B cell (primary cell): ENCODE measurements at regions of chr3 and their contacts with region 1.

Region 1: DNA sequence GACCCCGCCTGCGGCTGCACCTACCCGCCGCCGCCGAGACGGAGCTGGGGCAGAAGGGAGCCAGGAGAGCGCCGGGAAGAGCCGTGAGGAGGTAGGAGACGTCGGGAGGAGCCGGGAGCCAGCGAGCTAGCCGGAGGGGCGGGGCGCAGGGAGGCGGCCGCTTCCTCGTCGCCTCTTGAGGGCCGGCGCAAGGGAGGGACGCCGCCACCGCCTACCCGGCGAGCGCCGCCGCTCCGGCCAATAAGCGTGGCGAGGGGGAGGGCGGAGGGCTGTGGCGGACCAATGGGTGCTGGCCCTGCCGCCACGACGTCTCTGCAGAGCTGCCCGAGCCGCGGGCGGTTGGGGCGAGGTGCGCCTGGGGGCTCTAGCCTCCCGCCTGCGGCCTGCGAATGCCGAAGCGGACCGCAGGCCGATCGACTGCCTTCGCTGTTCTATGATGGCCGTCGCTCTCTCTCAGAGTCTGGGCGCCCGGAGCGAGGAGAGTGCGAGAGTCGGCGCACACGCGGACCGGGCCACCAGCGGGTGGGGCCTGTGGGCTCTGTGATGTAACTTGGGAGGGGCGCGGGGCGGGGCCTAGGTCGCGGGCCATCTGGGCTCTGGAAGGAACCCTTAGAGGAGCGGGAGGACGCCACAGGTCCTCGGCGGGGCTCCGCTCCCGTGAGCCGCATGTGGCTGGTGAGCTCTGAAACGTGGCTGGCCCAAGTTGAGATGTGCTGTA is 72.7 kb upstream of the MAP4 start:
- DNase-seq: peak; percentile 97
- ATAC-seq: peak; percentile 92
- H3K4me3 ChIP-seq: peak overlapping the region; percentile 21 to 91 (median 74)
- H3K4me3 Mint-ChIP-seq: peak overlapping the region; percentile 99
- H3K27ac ChIP-seq: peak overlapping the region; percentile 83 to 86
- H3K27ac Mint-ChIP-seq: peak overlapping the region; percentile 98
- H3K4me1 ChIP-seq: peaks cover 17 to 18% of the 10 kb centered on the region in 2 donors
- H3K4me1 Mint-ChIP-seq: peaks cover 32% of the 10 kb centered on the region
- H3K27me3 ChIP-seq: no peaks in the 10 kb centered on the region
- H3K27me3 Mint-ChIP-seq: no peaks in the 10 kb centered on the region
- CTCF ChIP-seq: no peak

Region 2: GRCh38 chr3:47781685-47782445 is 307.0 kb before region 1 on chr3 and contains the start of gene SMARCC1:
- CTCF ChIA-PET with region 1: no interaction called
- POLR2A ChIA-PET with region 1: no interaction called
- intact Hi-C with region 1: loop called (anchors 2 kb)
- DNase-seq: peak; percentile 99
- ATAC-seq: peak; percentile 87
- H3K4me3 ChIP-seq: peak within 1 kb of the TSS; percentile 68 to 94 (median 78)
- H3K4me3 Mint-ChIP-seq: peak within 1 kb of the TSS; percentile 99
- H3K27ac ChIP-seq: peak within 1 kb of the TSS; percentile 91 to 96
- H3K27ac Mint-ChIP-seq: peak within 1 kb of the TSS; percentile 99
- H3K4me1 ChIP-seq: peaks cover 32 to 44% of the 10 kb centered on the region in 2 donors
- H3K4me1 Mint-ChIP-seq: peaks cover 39% of the 10 kb centered on the region
- H3K27me3 ChIP-seq: no peaks in the 10 kb centered on the region
- H3K27me3 Mint-ChIP-seq: no peaks in the 10 kb centered on the region
- CTCF ChIP-seq: no peak
- total RNA-seq, gene SMARCC1: 149 and 155 TPM in 2 replicates

Region 3: DNA sequence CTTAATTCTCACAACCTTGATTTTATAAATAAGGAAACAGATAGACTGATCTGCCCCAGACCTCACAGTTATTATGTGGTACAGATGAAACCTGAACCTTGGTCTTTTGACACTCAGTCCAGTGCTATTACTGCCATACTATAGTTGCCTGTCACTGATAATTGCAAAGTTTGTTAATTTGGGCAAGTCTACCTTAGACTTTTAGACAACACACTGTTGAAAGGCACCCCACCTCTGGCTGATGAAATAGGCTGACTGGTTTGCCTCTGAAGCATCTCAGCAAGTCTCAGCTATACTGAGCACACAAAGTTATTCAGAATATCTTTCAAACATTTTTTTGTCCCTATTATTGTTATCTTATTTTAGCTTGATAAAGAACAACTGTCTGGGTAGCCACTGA is 19.6 kb before region 1 on chr3:
- CTCF ChIA-PET with region 1: no interaction called
- POLR2A ChIA-PET with region 1: no interaction called
- intact Hi-C with region 1: no loop called
- DNase-seq: no peak
- ATAC-seq: no peak
- H3K4me3 ChIP-seq: no peak overlapping the region
- H3K4me3 Mint-ChIP-seq: no peak overlapping the region
- H3K27ac ChIP-seq: no peak overlapping the region
- H3K27ac Mint-ChIP-seq: no peak overlapping the region
- H3K4me1 ChIP-seq: no peaks in the 10 kb centered on the region
- H3K4me1 Mint-ChIP-seq: peaks cover 11% of the 10 kb centered on the region
- H3K27me3 ChIP-seq: no peaks in the 10 kb centered on the region
- H3K27me3 Mint-ChIP-seq: no peaks in the 10 kb centered on the region
- CTCF ChIP-seq: no peak

Region 4: DNA sequence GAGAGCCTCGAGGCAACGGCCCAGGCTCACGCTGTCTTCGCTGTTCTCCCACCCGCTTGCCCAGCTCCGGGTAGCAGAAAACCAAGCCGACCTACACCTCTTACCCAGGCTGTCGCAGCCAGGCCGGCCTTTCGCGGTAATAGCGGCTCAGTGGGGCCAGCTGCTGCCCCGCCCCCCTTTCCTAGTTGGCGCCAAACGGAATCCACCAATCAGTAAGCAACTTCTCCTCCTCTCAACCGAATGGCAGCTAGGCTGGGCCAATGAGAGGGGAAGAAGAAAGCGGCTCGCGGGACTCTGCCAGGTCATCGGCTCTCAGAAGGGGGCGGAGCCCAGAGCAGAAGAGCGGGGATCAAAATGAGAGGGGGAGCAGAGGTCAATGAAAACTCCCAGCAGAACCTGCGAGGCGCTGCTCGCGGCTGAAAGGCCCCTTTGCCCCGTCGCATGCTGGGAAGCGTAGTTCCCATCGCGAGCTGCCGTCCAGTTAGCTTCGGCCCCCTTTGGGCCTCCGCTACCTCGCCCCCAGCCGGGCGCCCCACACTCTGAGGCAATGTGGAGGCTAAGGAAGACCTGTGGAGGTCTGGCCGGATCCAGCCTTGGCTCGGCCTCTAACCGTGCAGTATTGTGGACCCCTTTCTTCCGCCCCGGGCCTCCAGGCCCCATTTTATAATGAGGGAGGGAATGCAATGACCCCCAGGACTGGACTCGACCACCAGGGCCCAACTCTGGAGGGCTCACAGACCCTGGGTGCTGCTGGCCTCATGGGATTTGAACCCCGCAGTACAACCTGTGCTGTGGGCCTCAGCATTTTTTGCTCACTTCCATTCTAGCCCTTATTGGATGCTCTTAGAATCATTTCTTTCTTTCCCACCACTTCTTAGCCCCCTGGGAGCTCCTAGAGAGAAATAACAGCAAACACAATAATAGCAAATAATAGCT is 99.6 kb after region 1 on chr3 and contains the start of gene CDC25A:
- CTCF ChIA-PET with region 1: no interaction called
- POLR2A ChIA-PET with region 1: no interaction called
- intact Hi-C with region 1: loop called (anchors 1 kb)
- DNase-seq: peak; percentile 97
- ATAC-seq: peak; percentile 99
- H3K4me3 ChIP-seq: peak within 1 kb of the TSS; percentile 51 to 96 (median 76)
- H3K4me3 Mint-ChIP-seq: peak within 1 kb of the TSS; percentile 94
- H3K27ac ChIP-seq: peak within 1 kb of the TSS; percentile 38 to 71
- H3K27ac Mint-ChIP-seq: peak within 1 kb of the TSS; percentile 84
- H3K4me1 ChIP-seq: peaks cover 12 to 15% of the 10 kb centered on the region in 2 donors
- H3K4me1 Mint-ChIP-seq: peaks cover 15% of the 10 kb centered on the region
- H3K27me3 ChIP-seq: peaks cover 0 to 19% (median 8%) of the 10 kb centered on the region in 4 experiments
- H3K27me3 Mint-ChIP-seq: peaks cover 17% of the 10 kb centered on the region
- CTCF ChIP-seq: no peak
- total RNA-seq, gene CDC25A: 0.07 and 0.53 TPM in 2 replicates

Region 5: DNA sequence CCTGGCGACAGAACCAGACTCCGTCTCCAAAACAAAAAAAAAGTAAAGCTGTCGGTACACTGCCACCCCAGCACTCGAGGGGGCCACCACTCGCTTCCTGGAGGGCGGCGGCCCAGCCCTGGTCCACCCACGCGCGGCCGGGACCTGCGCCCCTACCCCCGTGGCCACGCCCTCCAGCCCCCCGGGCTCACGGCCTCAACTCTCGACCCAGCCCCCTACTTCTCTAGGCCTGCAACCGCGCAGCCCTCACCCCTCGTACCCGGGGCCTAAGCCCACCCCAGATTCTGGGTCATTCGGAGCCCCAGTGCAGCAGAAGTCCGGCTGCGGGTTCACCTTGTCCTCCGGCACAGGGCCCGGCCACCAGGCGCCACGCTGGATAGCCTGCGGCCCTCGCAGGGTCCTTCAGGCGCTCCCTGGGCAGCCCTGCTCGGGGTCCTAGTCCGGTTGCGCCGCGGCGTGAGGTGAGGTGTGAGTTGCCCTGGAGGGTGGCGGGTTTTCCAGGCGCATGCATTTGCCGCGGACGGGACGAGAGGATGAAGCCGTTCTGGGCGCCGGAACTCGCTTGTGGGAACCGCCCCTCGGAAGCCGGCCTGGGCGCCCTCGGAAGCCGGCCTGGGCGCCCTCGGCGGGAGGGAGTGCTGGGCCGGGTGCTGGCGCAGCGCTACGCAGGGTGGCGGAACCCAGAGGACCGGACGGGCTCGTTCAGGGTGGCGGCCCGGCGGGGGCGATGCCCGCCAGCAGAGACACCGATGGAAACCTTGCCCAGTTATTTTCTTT is 212.3 kb after region 1 on chr3:
- CTCF ChIA-PET with region 1: no interaction called
- POLR2A ChIA-PET with region 1: no interaction called
- intact Hi-C with region 1: loop called (anchors 2 kb)
- DNase-seq: peak; percentile 94
- ATAC-seq: peak; percentile 91
- H3K4me3 ChIP-seq: peak within 1 kb of the TSS; percentile 41 to 90 (median 82)
- H3K4me3 Mint-ChIP-seq: peak within 1 kb of the TSS; percentile 97
- H3K27ac ChIP-seq: peak within 1 kb of the TSS; percentile 92 to 96
- H3K27ac Mint-ChIP-seq: peak within 1 kb of the TSS; percentile 99
- H3K4me1 ChIP-seq: peaks cover 17 to 25% of the 10 kb centered on the region in 2 donors
- H3K4me1 Mint-ChIP-seq: peaks cover 55% of the 10 kb centered on the region
- H3K27me3 ChIP-seq: no peaks in the 10 kb centered on the region
- H3K27me3 Mint-ChIP-seq: no peaks in the 10 kb centered on the region
- CTCF ChIP-seq: no peak

Region 6: GRCh38 chr3:48685602-48686511 is 596.9 kb after region 1 on chr3 and contains the start of gene NCKIPSD:
- CTCF ChIA-PET with region 1: no interaction called
- POLR2A ChIA-PET with region 1: no interaction called
- intact Hi-C with region 1: loop called (anchors 5 kb)
- DNase-seq: peak; percentile 96
- ATAC-seq: peak; percentile 91
- H3K4me3 ChIP-seq: peak within 1 kb of the TSS in 4 of 5 experiments; percentile 58 to 75 (median 70)
- H3K4me3 Mint-ChIP-seq: peak within 1 kb of the TSS; percentile 89
- H3K27ac ChIP-seq: peak within 1 kb of the TSS; percentile 40 to 68
- H3K27ac Mint-ChIP-seq: peak within 1 kb of the TSS; percentile 92
- H3K4me1 ChIP-seq: peaks cover 10 to 25% of the 10 kb centered on the region in 2 donors
- H3K4me1 Mint-ChIP-seq: peaks cover 22% of the 10 kb centered on the region
- H3K27me3 ChIP-seq: no peaks in the 10 kb centered on the region
- H3K27me3 Mint-ChIP-seq: no peaks in the 10 kb centered on the region
- CTCF ChIP-seq: peak; percentile 91
- total RNA-seq, gene NCKIPSD: 19.1 and 19.7 TPM in 2 replicates